HAP-1 (cell line): ENCODE measurements at regions of chr11 and their contacts with region 1.

Region 1: GRCh38 chr11:123640677-123641494 is 13.5 kb downstream of the SCN3B start:
- DNase-seq: peak; percentile 38 to 70
- H3K4me3 ChIP-seq: no peak overlapping the region
- H3K4me1 ChIP-seq: no peaks in the 10 kb centered on the region
- H3K27me3 ChIP-seq: peaks cover 4% of the 10 kb centered on the region; the same call in 1 of the 2 replicates

Region 2: DNA sequence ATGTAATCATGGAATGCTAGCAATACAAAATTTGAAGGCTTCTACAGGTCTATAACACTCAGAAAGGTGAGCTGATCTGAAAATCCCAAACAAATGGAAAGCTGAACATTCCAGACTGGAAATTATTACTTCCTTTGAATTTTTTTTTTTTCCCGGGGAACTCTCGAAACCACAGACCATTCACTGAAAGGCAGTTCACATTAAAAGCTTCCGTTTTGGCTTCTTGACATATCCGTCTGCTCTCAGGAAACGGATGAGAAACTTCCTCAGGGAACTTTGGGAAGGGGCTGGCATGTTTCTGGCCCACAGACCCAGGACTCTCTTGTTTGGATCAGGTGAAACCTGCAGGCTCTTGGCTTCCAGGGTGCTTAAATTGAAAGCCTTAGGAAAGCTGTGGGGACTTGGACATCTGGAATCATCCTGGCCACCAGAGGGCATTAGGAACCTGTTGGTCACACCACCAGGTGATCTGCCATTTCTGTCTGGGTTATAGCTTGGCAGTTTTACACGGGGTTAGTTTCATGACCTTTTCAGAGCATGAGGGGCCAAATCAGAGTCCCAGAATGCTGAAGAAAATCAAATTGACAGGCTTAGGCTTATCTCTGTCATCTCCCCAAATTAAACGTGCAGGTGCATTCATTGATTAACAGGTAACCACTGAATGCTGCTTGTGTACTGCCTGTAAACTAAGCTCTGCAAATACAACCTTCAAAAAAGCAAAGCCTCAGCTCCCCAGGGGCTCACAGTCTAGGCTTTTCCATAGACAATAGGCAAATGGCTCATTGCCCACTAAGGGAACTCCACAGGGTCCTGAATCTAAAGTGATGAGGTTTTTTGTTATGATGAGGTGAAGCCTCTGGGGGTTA is 233.5 kb before region 1 on chr11:
- in situ Hi-C with region 1: no loop called
- DNase-seq: peak; percentile 76 to 84
- H3K4me3 ChIP-seq: no peak overlapping the region
- H3K4me1 ChIP-seq: peaks cover 4% of the 10 kb centered on the region
- H3K27me3 ChIP-seq: no peaks in the 10 kb centered on the region

Region 3: GRCh38 chr11:123707606-123708205 is 66.8 kb after region 1 on chr11:
- in situ Hi-C with region 1: loop called (anchors 10 kb)
- DNase-seq: peak; percentile 61 to 75
- H3K4me3 ChIP-seq: no peak overlapping the region
- H3K4me1 ChIP-seq: 0 out of 2 replicates have a peak, but pooled peaks cover 2% of the 10 kb centered on the region
- H3K27me3 ChIP-seq: no peaks in the 10 kb centered on the region